Mammary epithelial cell (primary cell): ENCODE measurements at regions of chr22 and their contacts with region 1.

Region 1: DNA sequence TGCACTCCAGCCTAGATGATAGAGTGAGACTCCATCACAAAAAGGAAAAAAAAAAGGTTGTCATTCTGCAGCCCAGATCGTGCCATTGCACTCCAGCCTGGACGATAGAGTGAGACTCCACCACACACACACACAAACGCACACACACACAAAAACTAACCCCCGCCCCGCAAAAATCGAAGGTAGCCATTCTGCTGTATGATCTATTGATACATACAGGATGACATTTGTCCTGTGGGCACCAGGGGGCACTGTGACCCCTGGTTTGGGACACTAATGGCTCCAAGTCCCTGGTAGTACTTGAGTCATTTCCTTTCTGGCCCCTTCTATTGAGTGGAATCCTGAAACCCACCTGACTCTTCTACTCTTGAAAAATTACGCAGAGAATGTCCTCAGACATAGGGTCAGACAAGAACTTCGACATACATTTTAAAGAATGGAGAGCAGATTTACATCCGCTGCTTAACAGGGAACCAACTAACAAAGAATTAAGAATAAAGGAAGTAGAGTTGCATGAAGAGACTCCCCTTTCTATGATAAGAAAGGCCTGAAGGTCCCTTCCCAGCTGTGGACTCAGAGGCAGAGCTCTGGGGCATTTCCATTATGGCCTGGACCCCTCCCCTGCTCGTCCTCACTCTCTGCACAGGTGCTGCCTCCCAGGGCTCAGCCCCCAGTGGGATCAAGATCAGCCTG is 35.0 kb upstream of the PRAME start:
- DNase-seq: peak; percentile 8
- H3K4me3 ChIP-seq: no peak overlapping the region
- H3K27ac ChIP-seq: no peak overlapping the region
- H3K4me1 ChIP-seq: no peaks in the 10 kb centered on the region
- H3K27me3 ChIP-seq: no peaks in the 10 kb centered on the region
- CTCF ChIP-seq: peak; percentile 54 to 61

Region 2: GRCh38 chr22:22687638-22688500 is 93.8 kb after region 1 on chr22:
- CTCF ChIA-PET with region 1: no interaction called
- dilution Hi-C with region 1: loop called (anchors 25 kb)
- in situ Hi-C with region 1: loop called in 1 of 2 experiments (anchors 25 kb)
- intact Hi-C with region 1: loop called (anchors 2 kb)
- DNase-seq: peak; percentile 9
- H3K4me3 ChIP-seq: no peak overlapping the region
- H3K27ac ChIP-seq: no peak overlapping the region
- H3K4me1 ChIP-seq: no peaks in the 10 kb centered on the region
- H3K27me3 ChIP-seq: no peaks in the 10 kb centered on the region
- CTCF ChIP-seq: peak; percentile 71 to 75

Region 3: DNA sequence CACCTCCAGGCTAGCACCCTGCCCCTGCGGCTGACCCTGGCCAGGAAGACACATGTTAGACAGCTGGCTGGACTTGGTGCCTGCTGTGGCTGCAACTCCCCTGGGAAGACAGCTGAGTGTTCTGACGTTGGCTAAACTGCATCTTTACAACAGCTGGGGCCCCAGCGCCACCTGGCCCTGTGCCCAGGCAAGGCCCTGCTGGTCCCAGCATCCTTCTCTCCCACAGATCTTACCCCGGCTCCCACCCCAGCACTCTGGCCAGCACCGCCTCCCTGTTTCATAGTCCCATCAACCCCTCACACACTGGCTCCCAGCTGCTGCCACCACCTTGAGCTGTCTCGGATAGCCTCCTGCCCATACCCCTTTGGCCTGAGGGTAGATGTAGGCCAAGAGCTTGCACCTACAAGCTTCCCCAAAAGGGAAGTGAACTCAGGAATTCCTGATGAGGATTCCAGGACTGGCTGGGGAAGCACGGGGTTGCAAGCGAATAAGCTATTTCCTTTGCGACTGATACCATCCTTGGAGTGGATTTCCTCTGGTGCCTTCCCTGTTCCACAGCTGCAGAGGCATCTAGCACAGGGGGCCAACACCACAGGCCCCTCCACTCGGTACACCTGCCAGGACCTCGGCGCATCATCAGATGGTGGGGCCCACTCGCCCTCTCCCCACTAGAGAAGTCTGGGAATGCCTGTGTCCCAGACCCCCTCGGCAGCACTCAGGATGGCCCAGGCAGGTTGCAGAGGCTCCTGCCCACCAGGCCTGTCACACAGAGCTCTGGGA is 519.1 kb after region 1 on chr22:
- CTCF ChIA-PET with region 1: no interaction called
- dilution Hi-C with region 1: loop called (anchors 10 kb)
- in situ Hi-C with region 1: no loop called
- intact Hi-C with region 1: no loop called
- DNase-seq: no peak
- H3K4me3 ChIP-seq: no peak overlapping the region
- H3K27ac ChIP-seq: no peak overlapping the region
- H3K4me1 ChIP-seq: no peaks in the 10 kb centered on the region
- H3K27me3 ChIP-seq: no peaks in the 10 kb centered on the region
- CTCF ChIP-seq: no peak